ENCODE measurements at regions of chrX and their contacts with region 1.

Region 1: DNA sequence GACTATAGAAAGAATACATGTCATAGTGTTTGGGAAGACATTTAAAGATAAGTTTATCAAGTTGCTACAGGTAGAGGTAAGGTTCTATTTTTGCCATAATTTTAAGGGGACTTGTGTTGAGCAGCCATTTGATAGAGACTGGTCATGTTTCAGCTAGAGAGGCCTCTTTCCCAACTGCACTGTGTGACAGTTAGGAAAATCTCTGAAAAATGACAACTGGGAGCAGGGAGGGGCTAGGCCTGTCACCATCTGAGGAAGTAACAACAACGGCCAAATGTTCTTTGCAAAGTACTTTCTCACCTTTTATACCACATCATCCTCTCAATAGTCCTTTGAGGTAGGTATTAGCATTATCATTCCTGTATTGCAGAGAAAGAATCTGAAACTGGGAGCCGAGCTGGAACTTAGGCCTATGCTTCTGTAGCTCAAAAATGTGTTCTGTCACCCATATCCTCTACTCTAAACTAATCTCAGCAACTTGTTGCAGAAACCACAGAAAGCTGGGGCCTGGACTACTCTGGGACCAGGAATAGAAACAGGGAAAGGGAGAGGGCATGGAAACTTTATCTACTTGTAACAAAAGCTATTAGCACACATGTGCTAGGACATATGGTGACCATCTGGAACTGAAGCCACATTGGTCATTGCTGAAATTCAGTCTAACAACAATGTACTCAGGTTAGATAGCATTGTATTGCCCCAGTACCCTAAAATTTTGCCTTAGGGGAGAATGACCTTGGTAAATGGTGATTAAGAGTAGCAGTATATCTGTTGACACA is 198.9 kb downstream of the MID1IP1 start:
- DNase-seq: no peak
- H3K4me3 ChIP-seq: no peak overlapping the region
- H3K27ac ChIP-seq: no peak overlapping the region
- H3K4me1 ChIP-seq: no peaks in the 10 kb centered on the region
- H3K27me3 ChIP-seq: no peaks in the 10 kb centered on the region
- CTCF ChIP-seq: no peak

Region 2: DNA sequence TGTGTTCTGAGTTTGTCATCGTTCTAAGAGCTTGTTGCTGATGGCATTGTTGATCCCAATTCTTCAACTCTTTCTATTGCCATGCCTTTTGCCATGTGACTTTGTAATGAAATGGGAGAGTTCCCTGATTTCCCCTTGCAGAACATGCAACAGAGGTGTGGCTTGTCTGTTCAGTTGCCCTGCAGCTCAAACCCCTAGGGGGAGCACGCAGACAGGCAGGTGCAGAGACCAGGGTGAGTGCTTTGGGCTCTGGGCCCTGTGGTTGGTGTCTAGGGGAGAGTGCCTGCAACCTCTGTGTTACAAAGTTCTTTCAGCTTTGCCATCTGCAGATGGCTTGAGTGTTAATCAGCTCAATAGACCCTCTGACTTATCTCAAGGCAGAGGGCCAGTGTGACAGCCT is 133.8 kb after region 1 on chrX:
- intact Hi-C with region 1: loop called (anchors 10 kb)
- DNase-seq: no peak
- H3K4me3 ChIP-seq: no peak overlapping the region
- H3K27ac ChIP-seq: no peak overlapping the region
- H3K4me1 ChIP-seq: no peaks in the 10 kb centered on the region
- H3K27me3 ChIP-seq: no peaks in the 10 kb centered on the region
- CTCF ChIP-seq: no peak

Measured in ascending aorta (tissue), 2 donors.